Sigmoid colon (tissue), 7 donors: ENCODE measurements at regions of chr12 and their contacts with region 1.

Region 1: GRCh38 chr12:15789220-15790171 is at the start of gene EPS8:
- DNase-seq: peak; percentile 96
- H3K4me3 ChIP-seq: peak within 1 kb of the TSS; percentile 63 to 91 (median 83)
- H3K27ac ChIP-seq: peak within 1 kb of the TSS; percentile 94 to 97 (median 94)
- H3K4me1 ChIP-seq: peaks cover 0 to 37% (median 14%) of the 10 kb centered on the region in 4 donors
- H3K27me3 ChIP-seq: no peaks in the 10 kb centered on the region
- CTCF ChIP-seq: no peak
- EP300 ChIP-seq: no peak
- POLR2A ChIP-seq: peak; percentile 72 to 77
- total RNA-seq, gene EPS8: 108 to 132 (median 119) TPM

Region 2: DNA sequence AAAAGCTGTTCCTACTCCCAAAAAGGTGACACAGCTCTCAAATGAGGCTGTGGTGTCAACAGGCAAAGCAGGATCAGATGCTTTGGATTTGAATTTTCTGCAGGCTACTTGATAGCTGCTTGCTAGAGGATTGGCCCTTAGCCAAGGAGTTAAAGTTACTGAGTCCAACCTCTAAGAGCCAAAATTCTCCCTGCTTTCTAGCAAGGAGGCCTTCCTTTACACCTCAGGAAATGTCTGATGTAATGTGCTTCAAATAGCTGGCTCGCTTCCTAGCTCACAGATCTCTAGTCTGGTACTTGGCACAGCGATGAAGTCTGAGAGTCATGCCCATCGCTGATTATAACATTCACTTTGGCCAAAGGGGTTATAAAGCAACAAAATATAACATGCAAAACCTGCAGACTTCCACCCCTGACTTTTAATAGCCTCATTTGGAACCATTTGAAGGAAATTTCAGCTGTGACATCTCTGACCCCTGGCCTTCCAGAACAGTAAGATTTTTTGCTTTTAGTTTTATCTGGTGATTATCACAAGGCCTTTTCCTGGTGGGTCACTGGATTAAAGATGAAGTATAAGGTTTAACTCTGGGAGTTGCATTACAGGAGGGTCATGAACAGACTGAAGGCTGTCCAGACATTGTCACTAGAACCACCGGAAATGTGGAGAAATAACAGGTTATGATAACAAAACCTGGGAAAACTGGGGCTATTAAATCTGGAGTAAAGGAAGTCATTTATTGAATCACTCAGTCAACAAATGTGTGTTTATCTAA is 190.0 kb before region 1 on chr12:
- intact Hi-C with region 1: loop called (anchors 5 kb)
- DNase-seq: no peak
- H3K4me3 ChIP-seq: no peak overlapping the region
- H3K27ac ChIP-seq: peak overlapping the region in 3 of 4 donors; percentile 15 to 64 (median 43)
- H3K4me1 ChIP-seq: peaks cover 0 to 12% (median 9%) of the 10 kb centered on the region in 4 donors
- H3K27me3 ChIP-seq: no peaks in the 10 kb centered on the region
- CTCF ChIP-seq: no peak
- EP300 ChIP-seq: no peak
- POLR2A ChIP-seq: no peak

Region 3: GRCh38 chr12:15693228-15693911 is 96.1 kb before region 1 on chr12:
- intact Hi-C with region 1: loop called (anchors 5 kb)
- DNase-seq: no peak
- H3K4me3 ChIP-seq: no peak overlapping the region
- H3K27ac ChIP-seq: peak overlapping the region; percentile 17 to 83 (median 72)
- H3K4me1 ChIP-seq: peaks cover 0 to 69% (median 67%) of the 10 kb centered on the region in 4 donors
- H3K27me3 ChIP-seq: no peaks in the 10 kb centered on the region
- CTCF ChIP-seq: no peak
- EP300 ChIP-seq: no peak
- POLR2A ChIP-seq: no peak